IMR-90 (cell line): ENCODE measurements at regions of chr16 and their contacts with region 1.

Region 1: GRCh38 chr16:48271728-48272127 is 24.4 kb upstream of the ABCC11 start:
- DNase-seq: peak; percentile 38
- ATAC-seq: peak; percentile 49; the same call in 1 of the 2 replicates
- H3K4me3 ChIP-seq: no peak overlapping the region
- H3K27ac ChIP-seq: no peak overlapping the region
- H3K4me1 ChIP-seq: peaks cover 2% of the 10 kb centered on the region; the same call in 1 of the 2 replicates
- H3K27me3 ChIP-seq: no peaks in the 10 kb centered on the region
- CTCF ChIP-seq: peak; percentile 24; the same call in 1 of the 2 replicates
- POLR2A ChIP-seq: no peak
- RAD21 ChIP-seq: peak; percentile 16; the same call in 1 of the 2 replicates

Region 2: DNA sequence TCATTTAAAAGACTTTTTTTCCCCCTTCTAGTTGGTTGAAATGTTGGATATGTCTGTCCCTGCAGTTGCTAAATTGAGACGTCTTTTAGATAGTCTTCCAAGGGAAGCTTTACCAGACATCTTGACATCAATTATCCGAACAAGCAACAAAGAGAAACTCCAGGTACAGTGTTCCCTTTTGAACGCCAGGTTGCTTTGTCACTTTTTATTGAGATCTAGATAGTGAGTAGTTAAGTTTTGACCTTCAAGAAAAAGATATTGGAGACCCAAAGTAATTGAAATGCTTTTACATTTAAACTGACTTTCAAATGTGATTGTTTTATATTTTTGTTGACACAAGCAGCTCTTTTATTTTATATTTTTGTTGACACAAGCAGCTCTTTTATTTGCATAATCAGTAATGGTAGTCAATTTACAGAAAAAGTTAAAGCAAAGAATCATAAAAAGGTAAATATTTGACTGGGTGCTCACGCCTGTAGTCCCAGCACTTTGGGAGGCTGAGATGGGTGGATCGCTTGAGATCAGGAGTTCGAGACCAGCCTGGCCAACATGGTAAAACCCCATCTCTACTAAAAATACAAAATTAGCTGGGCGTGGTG is 15.1 kb before region 1 on chr16:
- CTCF ChIA-PET with region 1: interaction called, 4 read pairs
- POLR2A ChIA-PET with region 1: no interaction called
- dilution Hi-C with region 1: no loop called
- in situ Hi-C with region 1: no loop called
- intact Hi-C with region 1: loop called (anchors 2 kb)
- DNase-seq: no peak
- ATAC-seq: no peak
- H3K4me3 ChIP-seq: no peak overlapping the region
- H3K27ac ChIP-seq: no peak overlapping the region
- H3K4me1 ChIP-seq: no peaks in the 10 kb centered on the region
- H3K27me3 ChIP-seq: no peaks in the 10 kb centered on the region
- CTCF ChIP-seq: no peak
- POLR2A ChIP-seq: no peak
- RAD21 ChIP-seq: no peak

Region 3: GRCh38 chr16:48321317-48322036 is 49.7 kb after region 1 on chr16:
- CTCF ChIA-PET with region 1: no interaction called
- POLR2A ChIA-PET with region 1: no interaction called
- dilution Hi-C with region 1: no loop called
- in situ Hi-C with region 1: no loop called
- intact Hi-C with region 1: loop called (anchors 5 kb)
- DNase-seq: peak; percentile 85
- ATAC-seq: peak; percentile 80
- H3K4me3 ChIP-seq: no peak overlapping the region
- H3K27ac ChIP-seq: peak overlapping the region; percentile 42; the same call in 1 of the 2 replicates
- H3K4me1 ChIP-seq: peaks cover 9% of the 10 kb centered on the region
- H3K27me3 ChIP-seq: no peaks in the 10 kb centered on the region
- CTCF ChIP-seq: no peak
- POLR2A ChIP-seq: no peak
- RAD21 ChIP-seq: no peak